Activated T-helper 1 cell treated with anti-CD3 and anti-CD28 coated beads, Interleukin-12 subunit alpha, Interleukin-12 subunit beta, Interleukin-2, Interleukin-4 antibody, amounts not matched to agents 30 ng/mL and 10 ng/mL and 1 ng/mL, durations not matched to agents 14 hours and 24 hours and 36 hours (primary cell): ENCODE measurements at regions of chr7 and their contacts with region 1.

Region 1: DNA sequence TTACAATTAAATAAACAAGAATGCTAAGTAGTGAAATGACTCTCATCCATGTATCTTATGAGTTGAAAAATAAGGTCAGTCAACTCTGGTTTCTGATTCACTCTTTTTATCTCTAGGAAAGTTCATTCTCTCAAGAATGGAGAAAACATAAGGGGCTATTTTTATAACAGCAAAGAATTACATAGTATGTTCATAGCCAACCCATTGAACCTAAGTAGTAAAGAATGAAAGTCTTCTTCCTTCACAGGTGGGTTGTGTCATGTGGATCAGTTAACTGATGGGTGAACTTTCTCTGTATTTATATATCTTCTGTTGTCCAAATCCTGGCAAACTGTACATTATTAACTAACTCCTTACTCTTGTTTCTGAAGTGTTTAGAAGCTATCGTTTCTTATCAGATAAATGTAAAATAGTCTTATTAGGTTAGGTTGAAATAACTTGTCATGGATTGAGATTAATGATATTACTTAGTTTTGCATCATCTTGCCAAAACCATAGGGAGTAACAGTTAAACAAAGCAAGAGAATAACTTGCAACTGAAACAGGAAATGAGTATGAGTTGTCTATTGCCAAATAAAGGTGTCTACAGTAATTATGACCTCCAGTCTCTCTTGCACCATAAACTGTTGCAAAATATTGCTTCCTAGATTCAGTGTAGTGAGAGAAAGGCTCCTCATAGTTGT is 86.8 kb downstream of the ANKRD7 start:
- DNase-seq: no peak
- H3K4me3 Mint-ChIP-seq: no peak overlapping the region
- H3K27ac Mint-ChIP-seq: peak overlapping the region; percentile 78
- H3K4me1 Mint-ChIP-seq: peaks cover 35% of the 10 kb centered on the region
- H3K27me3 Mint-ChIP-seq: no peaks in the 10 kb centered on the region

Region 2: GRCh38 chr7:118080947-118081346 is 230.3 kb before region 1 on chr7:
- intact Hi-C with region 1: loop called (anchors 5 kb)
- DNase-seq: peak; percentile 31
- H3K4me3 Mint-ChIP-seq: peak overlapping the region; percentile 11
- H3K27ac Mint-ChIP-seq: peak overlapping the region; percentile 73
- H3K4me1 Mint-ChIP-seq: peaks cover 21% of the 10 kb centered on the region
- H3K27me3 Mint-ChIP-seq: peaks cover 3% of the 10 kb centered on the region

Region 3: DNA sequence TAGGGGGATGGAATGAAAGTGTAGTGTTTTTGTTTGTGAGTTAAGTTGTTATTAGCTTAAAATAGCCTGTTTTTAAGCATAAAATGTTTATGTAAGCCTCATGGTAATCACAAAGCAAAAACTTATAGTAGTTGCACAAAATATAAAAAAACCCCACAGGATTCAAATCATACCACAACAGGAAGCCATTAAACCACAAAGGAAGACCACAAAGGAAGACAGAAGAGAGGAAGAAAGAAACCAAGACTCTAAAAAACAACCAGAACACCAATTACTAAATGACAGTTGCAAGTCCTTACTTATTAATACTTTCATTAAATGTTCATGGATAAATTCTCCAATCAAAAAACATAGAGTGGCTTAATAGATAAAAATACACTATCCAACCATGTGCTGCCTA is 23.2 kb before region 1 on chr7:
- intact Hi-C with region 1: loop called (anchors 1 kb)
- DNase-seq: peak; percentile 12
- H3K4me3 Mint-ChIP-seq: peak overlapping the region; percentile 27
- H3K27ac Mint-ChIP-seq: peak overlapping the region; percentile 84
- H3K4me1 Mint-ChIP-seq: peaks cover 25% of the 10 kb centered on the region
- H3K27me3 Mint-ChIP-seq: peaks cover 25% of the 10 kb centered on the region

Region 4: DNA sequence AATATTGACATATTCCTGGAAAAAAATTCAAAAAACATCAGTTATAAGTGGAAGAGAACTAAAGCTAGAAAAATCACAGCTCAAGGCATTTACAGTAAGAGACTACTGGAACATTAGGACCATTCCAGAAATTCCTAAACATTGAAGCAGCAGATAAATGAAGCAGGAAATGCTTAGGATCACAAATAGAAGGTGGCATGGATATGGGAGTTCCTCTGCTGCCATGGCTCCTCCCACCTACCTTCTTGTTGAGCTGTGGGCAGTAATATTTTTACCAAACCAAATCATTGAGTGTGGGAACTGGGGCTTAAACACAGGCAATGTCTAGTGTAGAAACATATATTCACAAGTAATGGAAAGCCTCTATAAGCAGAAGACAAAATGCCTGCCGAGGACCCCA is 206.0 kb after region 1 on chr7:
- intact Hi-C with region 1: no loop called
- DNase-seq: no peak
- H3K4me3 Mint-ChIP-seq: no peak overlapping the region
- H3K27ac Mint-ChIP-seq: no peak overlapping the region
- H3K4me1 Mint-ChIP-seq: no peaks in the 10 kb centered on the region
- H3K27me3 Mint-ChIP-seq: no peaks in the 10 kb centered on the region